CD8-positive, alpha-beta T cell (primary cell): ENCODE measurements at regions of chr17 and their contacts with region 1.

Region 1: GRCh38 chr17:81860756-81861518 is 602 bp upstream of the P4HB start:
- DNase-seq: peak; percentile 98 to 100 (median 99)
- ATAC-seq: peak; percentile 87
- H3K4me3 ChIP-seq: peak overlapping the region; percentile 54 to 72
- H3K4me3 Mint-ChIP-seq: peak overlapping the region; percentile 90
- H3K27ac ChIP-seq: peak overlapping the region; percentile 88 to 98
- H3K27ac Mint-ChIP-seq: peak overlapping the region; percentile 98
- H3K4me1 ChIP-seq: peaks cover 33% of the 10 kb centered on the region
- H3K4me1 Mint-ChIP-seq: peaks cover 44% of the 10 kb centered on the region
- H3K27me3 ChIP-seq: no peaks in the 10 kb centered on the region
- H3K27me3 Mint-ChIP-seq: no peaks in the 10 kb centered on the region
- CTCF ChIP-seq: no peak

Region 2: GRCh38 chr17:81512560-81513371 is 348.2 kb before region 1 on chr17 and contains the start of gene ACTG1:
- CTCF ChIA-PET with region 1: no interaction called
- POLR2A ChIA-PET with region 1: no interaction called
- intact Hi-C with region 1: loop called (anchors 2 to 10 kb)
- DNase-seq: peak; percentile 87 to 97 (median 92)
- ATAC-seq: peak; percentile 60
- H3K4me3 ChIP-seq: peak within 1 kb of the TSS; percentile 84 to 93
- H3K4me3 Mint-ChIP-seq: peak within 1 kb of the TSS; percentile 98
- H3K27ac ChIP-seq: peak within 1 kb of the TSS; percentile 56 to 93
- H3K27ac Mint-ChIP-seq: peak within 1 kb of the TSS; percentile 98
- H3K4me1 ChIP-seq: peaks cover 49% of the 10 kb centered on the region
- H3K4me1 Mint-ChIP-seq: peaks cover 57% of the 10 kb centered on the region
- H3K27me3 ChIP-seq: no peaks in the 10 kb centered on the region
- H3K27me3 Mint-ChIP-seq: no peaks in the 10 kb centered on the region
- CTCF ChIP-seq: no peak
- total RNA-seq, gene ACTG1: 1,370 to 1,375 TPM

Region 3: GRCh38 chr17:81711814-81712467 is 149.0 kb before region 1 on chr17 and contains the start of gene SLC25A10:
- CTCF ChIA-PET with region 1: no interaction called
- POLR2A ChIA-PET with region 1: interaction called, 4 read pairs
- intact Hi-C with region 1: loop called in 1 of 2 experiments (anchors 1 kb)
- DNase-seq: peak; percentile 46 to 89 (median 74)
- ATAC-seq: peak; percentile 84
- H3K4me3 ChIP-seq: peak within 1 kb of the TSS; percentile 38 to 53
- H3K4me3 Mint-ChIP-seq: peak within 1 kb of the TSS; percentile 83
- H3K27ac ChIP-seq: no peak within 1 kb of the TSS
- H3K27ac Mint-ChIP-seq: no peak within 1 kb of the TSS
- H3K4me1 ChIP-seq: peaks cover 25% of the 10 kb centered on the region
- H3K4me1 Mint-ChIP-seq: peaks cover 13% of the 10 kb centered on the region
- H3K27me3 ChIP-seq: no peaks in the 10 kb centered on the region
- H3K27me3 Mint-ChIP-seq: no peaks in the 10 kb centered on the region
- CTCF ChIP-seq: no peak
- total RNA-seq, gene SLC25A10: 3.7 to 5.4 TPM

Region 4: GRCh38 chr17:81890447-81891299 is 29.7 kb after region 1 on chr17:
- CTCF ChIA-PET with region 1: no interaction called
- POLR2A ChIA-PET with region 1: interaction called, 4 read pairs
- intact Hi-C with region 1: loop called (anchors 1 kb)
- DNase-seq: peak in 3 of 9 experiments; percentile 26 to 52 (median 38)
- ATAC-seq: no peak
- H3K4me3 ChIP-seq: peak overlapping the region; percentile 51 to 53
- H3K4me3 Mint-ChIP-seq: peak overlapping the region; percentile 87
- H3K27ac ChIP-seq: peak overlapping the region; percentile 54 to 57
- H3K27ac Mint-ChIP-seq: peak overlapping the region; percentile 95
- H3K4me1 ChIP-seq: peaks cover 19% of the 10 kb centered on the region
- H3K4me1 Mint-ChIP-seq: peaks cover 23% of the 10 kb centered on the region
- H3K27me3 ChIP-seq: no peaks in the 10 kb centered on the region
- H3K27me3 Mint-ChIP-seq: no peaks in the 10 kb centered on the region
- CTCF ChIP-seq: no peak

Region 5: GRCh38 chr17:81927653-81928543 is 67.0 kb after region 1 on chr17 and contains the start of gene MAFG:
- CTCF ChIA-PET with region 1: no interaction called
- POLR2A ChIA-PET with region 1: no interaction called
- intact Hi-C with region 1: loop called (anchors 2 kb)
- DNase-seq: peak; percentile 72 to 96 (median 87)
- ATAC-seq: peak; percentile 69
- H3K4me3 ChIP-seq: peak within 1 kb of the TSS; percentile 43 to 59
- H3K4me3 Mint-ChIP-seq: peak within 1 kb of the TSS; percentile 76
- H3K27ac ChIP-seq: peak within 1 kb of the TSS in 1 of 2 experiments; percentile 36
- H3K27ac Mint-ChIP-seq: peak within 1 kb of the TSS; percentile 60
- H3K4me1 ChIP-seq: peaks cover 28% of the 10 kb centered on the region
- H3K4me1 Mint-ChIP-seq: peaks cover 19% of the 10 kb centered on the region
- H3K27me3 ChIP-seq: peaks cover 0 to 13% of the 10 kb centered on the region in 2 experiments
- H3K27me3 Mint-ChIP-seq: peaks cover 4% of the 10 kb centered on the region
- CTCF ChIP-seq: no peak
- total RNA-seq, gene MAFG: 8.5 to 10.5 TPM